Endothelial cell of umbilical vein (primary cell): ENCODE measurements at regions of chr3 and their contacts with region 1.

Region 1: GRCh38 chr3:30693470-30694120 is 87.2 kb downstream of the TGFBR2 start:
- DNase-seq: peak; percentile 85
- H3K4me3 ChIP-seq: no peak overlapping the region
- H3K27ac ChIP-seq: peak overlapping the region; percentile 25
- H3K4me1 ChIP-seq: peaks cover 45% of the 10 kb centered on the region
- H3K27me3 ChIP-seq: no peaks in the 10 kb centered on the region
- CTCF ChIP-seq: peak; percentile 57 to 65
- POLR2A ChIP-seq: peak; percentile 24

Region 2: GRCh38 chr3:30012941-30013543 is 680.6 kb before region 1 on chr3:
- CTCF ChIA-PET with region 1: interaction called, 12 read pairs
- POLR2A ChIA-PET with region 1: no interaction called
- dilution Hi-C with region 1: no loop called
- intact Hi-C with region 1: loop called (anchors 1 kb)
- DNase-seq: peak; percentile 76
- H3K4me3 ChIP-seq: no peak overlapping the region
- H3K27ac ChIP-seq: no peak overlapping the region
- H3K4me1 ChIP-seq: peaks cover 5% of the 10 kb centered on the region
- H3K27me3 ChIP-seq: no peaks in the 10 kb centered on the region
- CTCF ChIP-seq: peak; percentile 55 to 56
- POLR2A ChIP-seq: no peak

Region 3: GRCh38 chr3:30073622-30074021 is 620.0 kb before region 1 on chr3:
- CTCF ChIA-PET with region 1: no interaction called
- POLR2A ChIA-PET with region 1: no interaction called
- dilution Hi-C with region 1: no loop called
- intact Hi-C with region 1: no loop called
- DNase-seq: no peak
- H3K4me3 ChIP-seq: no peak overlapping the region
- H3K27ac ChIP-seq: no peak overlapping the region
- H3K4me1 ChIP-seq: no peaks in the 10 kb centered on the region
- H3K27me3 ChIP-seq: no peaks in the 10 kb centered on the region
- CTCF ChIP-seq: no peak
- POLR2A ChIP-seq: no peak

Region 4: GRCh38 chr3:30112902-30113484 is 580.6 kb before region 1 on chr3:
- CTCF ChIA-PET with region 1: interaction called, 7 read pairs
- POLR2A ChIA-PET with region 1: no interaction called
- dilution Hi-C with region 1: no loop called
- intact Hi-C with region 1: loop called (anchors 1 kb)
- DNase-seq: peak; percentile 76
- H3K4me3 ChIP-seq: no peak overlapping the region
- H3K27ac ChIP-seq: no peak overlapping the region
- H3K4me1 ChIP-seq: no peaks in the 10 kb centered on the region
- H3K27me3 ChIP-seq: peaks cover 0 to 2% of the 10 kb centered on the region in 2 experiments
- CTCF ChIP-seq: peak; percentile 26 to 37
- POLR2A ChIP-seq: no peak

Region 5: GRCh38 chr3:30292192-30292893 is 401.3 kb before region 1 on chr3:
- CTCF ChIA-PET with region 1: interaction called, 3 read pairs
- POLR2A ChIA-PET with region 1: no interaction called
- dilution Hi-C with region 1: no loop called
- intact Hi-C with region 1: loop called (anchors 1 kb)
- DNase-seq: peak; percentile 93
- H3K4me3 ChIP-seq: peak overlapping the region in 1 of 3 experiments; percentile 44
- H3K27ac ChIP-seq: peak overlapping the region; percentile 99
- H3K4me1 ChIP-seq: peaks cover 63% of the 10 kb centered on the region
- H3K27me3 ChIP-seq: no peaks in the 10 kb centered on the region
- CTCF ChIP-seq: no peak
- POLR2A ChIP-seq: no peak

Region 6: GRCh38 chr3:30658328-30659052 is 35.1 kb before region 1 on chr3:
- CTCF ChIA-PET with region 1: interaction called, 14 read pairs
- POLR2A ChIA-PET with region 1: interaction called, 3 read pairs
- dilution Hi-C with region 1: no loop called
- intact Hi-C with region 1: loop called (anchors 1 kb)
- DNase-seq: peak; percentile 95
- H3K4me3 ChIP-seq: no peak overlapping the region
- H3K27ac ChIP-seq: peak overlapping the region; percentile 98
- H3K4me1 ChIP-seq: peaks cover 100% of the 10 kb centered on the region
- H3K27me3 ChIP-seq: no peaks in the 10 kb centered on the region
- CTCF ChIP-seq: no peak
- POLR2A ChIP-seq: peak; percentile 68

Region 7: DNA sequence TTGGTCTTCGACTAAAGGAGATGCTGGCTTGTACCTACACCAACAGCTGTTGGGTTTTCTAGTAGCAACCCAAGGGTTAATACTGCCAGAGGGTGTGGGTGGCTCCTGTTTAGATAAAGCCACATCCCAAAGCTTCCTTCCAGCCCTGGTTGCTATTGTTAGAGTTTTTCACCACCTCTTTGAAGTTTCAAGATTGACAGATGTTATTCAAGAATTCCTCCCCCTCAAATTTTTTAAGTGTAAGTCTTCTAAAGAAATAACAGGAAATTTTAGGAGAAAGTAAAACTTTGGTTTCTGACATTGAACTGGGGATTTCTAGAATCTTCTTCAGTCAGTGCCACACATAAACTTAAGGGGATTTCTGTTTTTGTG is 26.3 kb before region 1 on chr3:
- CTCF ChIA-PET with region 1: interaction called, 14 read pairs
- POLR2A ChIA-PET with region 1: interaction called, 6 read pairs
- dilution Hi-C with region 1: no loop called
- intact Hi-C with region 1: loop called (anchors 1 kb)
- DNase-seq: peak; percentile 63
- H3K4me3 ChIP-seq: no peak overlapping the region
- H3K27ac ChIP-seq: peak overlapping the region; percentile 52
- H3K4me1 ChIP-seq: peaks cover 56% of the 10 kb centered on the region
- H3K27me3 ChIP-seq: no peaks in the 10 kb centered on the region
- CTCF ChIP-seq: no peak
- POLR2A ChIP-seq: no peak

Region 8: GRCh38 chr3:30751610-30752299 is 58.2 kb after region 1 on chr3:
- CTCF ChIA-PET with region 1: interaction called, 19 read pairs
- POLR2A ChIA-PET with region 1: no interaction called
- dilution Hi-C with region 1: no loop called
- intact Hi-C with region 1: loop called (anchors 1 kb)
- DNase-seq: peak; percentile 78
- H3K4me3 ChIP-seq: no peak overlapping the region
- H3K27ac ChIP-seq: no peak overlapping the region
- H3K4me1 ChIP-seq: peaks cover 21% of the 10 kb centered on the region
- H3K27me3 ChIP-seq: no peaks in the 10 kb centered on the region
- CTCF ChIP-seq: peak; percentile 49 to 65
- POLR2A ChIP-seq: no peak

Region 9: GRCh38 chr3:30819067-30819798 is 125.6 kb after region 1 on chr3:
- CTCF ChIA-PET with region 1: no interaction called
- POLR2A ChIA-PET with region 1: no interaction called
- dilution Hi-C with region 1: no loop called
- intact Hi-C with region 1: no loop called
- DNase-seq: no peak
- H3K4me3 ChIP-seq: no peak overlapping the region
- H3K27ac ChIP-seq: no peak overlapping the region
- H3K4me1 ChIP-seq: no peaks in the 10 kb centered on the region
- H3K27me3 ChIP-seq: peaks cover 7% of the 10 kb centered on the region in 2 experiments
- CTCF ChIP-seq: no peak
- POLR2A ChIP-seq: no peak

Region 10: GRCh38 chr3:30977592-30977991 is 284.0 kb after region 1 on chr3:
- CTCF ChIA-PET with region 1: no interaction called
- POLR2A ChIA-PET with region 1: no interaction called
- dilution Hi-C with region 1: no loop called
- intact Hi-C with region 1: no loop called
- DNase-seq: no peak
- H3K4me3 ChIP-seq: no peak overlapping the region
- H3K27ac ChIP-seq: no peak overlapping the region
- H3K4me1 ChIP-seq: no peaks in the 10 kb centered on the region
- H3K27me3 ChIP-seq: no peaks in the 10 kb centered on the region
- CTCF ChIP-seq: no peak
- POLR2A ChIP-seq: no peak